Endothelial cell of umbilical vein (primary cell): ENCODE measurements at regions of chr3 and their contacts with region 1.

Region 1: GRCh38 chr3:195154793-195155535 is 116.0 kb downstream of the XXYLT1 start:
- DNase-seq: peak; percentile 100
- H3K4me3 ChIP-seq: no peak overlapping the region
- H3K27ac ChIP-seq: peak overlapping the region; percentile 95
- H3K4me1 ChIP-seq: peaks cover 86% of the 10 kb centered on the region
- H3K27me3 ChIP-seq: no peaks in the 10 kb centered on the region
- CTCF ChIP-seq: no peak
- POLR2A ChIP-seq: peak; percentile 80

Region 2: DNA sequence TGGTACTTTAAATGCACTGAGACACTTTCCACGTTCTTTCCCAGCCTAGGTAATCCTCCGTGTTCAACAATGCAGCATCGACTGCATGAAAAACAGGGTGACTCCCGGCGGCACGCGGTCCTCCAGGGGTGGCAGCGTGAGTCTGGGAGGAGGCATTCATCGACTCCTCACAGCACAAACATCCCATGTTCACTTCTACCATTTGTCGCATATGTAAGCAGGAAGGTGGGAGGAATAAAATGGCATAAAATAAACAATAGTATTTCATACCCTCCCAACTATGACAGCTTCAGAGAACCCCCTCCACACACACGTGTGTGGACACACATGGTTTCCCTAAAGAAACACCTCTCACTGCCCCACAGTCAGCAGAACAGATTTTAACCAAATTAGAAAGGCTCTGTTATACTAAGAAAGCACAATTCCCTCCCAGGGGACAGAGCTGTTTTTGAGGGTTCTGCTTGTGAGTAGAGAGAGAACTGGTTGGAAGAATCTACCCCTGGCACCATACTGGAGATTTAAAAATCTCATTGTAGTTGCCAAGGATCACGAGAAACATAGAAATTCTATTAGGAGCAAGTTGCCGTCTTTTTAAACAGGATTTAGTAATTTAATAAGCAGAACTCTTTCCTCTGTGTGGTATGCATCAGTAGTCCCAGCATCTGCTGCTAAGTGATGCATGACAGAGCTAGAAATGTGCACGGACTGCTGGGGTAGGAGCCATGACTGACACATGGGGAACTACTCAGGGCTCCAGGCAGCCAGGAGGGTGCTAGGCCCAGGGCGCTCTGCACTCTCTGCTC is 463.3 kb before region 1 on chr3:
- CTCF ChIA-PET with region 1: interaction called, 5 read pairs
- POLR2A ChIA-PET with region 1: interaction called, 18 read pairs
- dilution Hi-C with region 1: no loop called
- intact Hi-C with region 1: no loop called
- DNase-seq: peak; percentile 68
- H3K4me3 ChIP-seq: no peak overlapping the region
- H3K27ac ChIP-seq: peak overlapping the region; percentile 39
- H3K4me1 ChIP-seq: peaks cover 19% of the 10 kb centered on the region
- H3K27me3 ChIP-seq: no peaks in the 10 kb centered on the region
- CTCF ChIP-seq: no peak
- POLR2A ChIP-seq: peak; percentile 76

Region 3: GRCh38 chr3:195036974-195037373 is 118.0 kb before region 1 on chr3:
- CTCF ChIA-PET with region 1: no interaction called
- POLR2A ChIA-PET with region 1: no interaction called
- dilution Hi-C with region 1: no loop called
- intact Hi-C with region 1: no loop called
- DNase-seq: no peak
- H3K4me3 ChIP-seq: no peak overlapping the region
- H3K27ac ChIP-seq: no peak overlapping the region
- H3K4me1 ChIP-seq: peaks cover 30% of the 10 kb centered on the region
- H3K27me3 ChIP-seq: no peaks in the 10 kb centered on the region
- CTCF ChIP-seq: no peak
- POLR2A ChIP-seq: no peak

Region 4: DNA sequence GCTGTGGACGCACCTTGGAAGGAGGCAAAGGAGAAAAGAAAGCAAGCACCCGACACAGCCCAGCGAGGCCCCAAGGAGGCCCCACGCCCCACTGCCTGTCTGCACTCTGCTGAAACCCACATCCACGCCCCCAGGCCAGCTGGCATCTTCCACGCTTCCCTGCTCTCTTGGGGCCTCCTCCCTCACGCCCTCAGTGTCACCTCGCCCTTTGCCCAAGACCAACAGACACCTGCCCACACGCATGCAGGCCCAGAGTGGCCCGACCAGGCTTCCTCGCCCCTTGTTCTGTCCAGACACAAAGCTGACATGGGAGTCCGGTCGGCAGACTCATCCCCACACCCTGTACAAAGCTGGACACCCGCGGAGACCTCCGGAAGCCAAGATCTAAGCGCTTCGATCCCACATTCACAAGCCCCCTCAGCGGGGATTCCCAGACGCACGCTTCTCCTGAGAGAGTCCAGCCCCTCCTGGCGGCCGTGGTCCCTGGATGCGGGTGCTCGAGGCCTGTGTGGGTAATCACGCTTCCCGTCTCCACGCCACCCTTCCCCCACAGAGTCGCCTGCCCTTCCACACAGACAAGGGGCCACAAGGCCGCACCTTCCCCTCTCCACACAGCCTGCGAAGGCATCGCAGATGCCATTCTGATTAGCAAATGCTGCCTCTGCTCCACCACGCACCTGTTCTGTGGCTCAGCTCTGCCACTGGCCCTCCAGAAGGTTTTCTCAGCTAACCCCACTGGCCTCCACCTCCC is 60.6 kb before region 1 on chr3:
- CTCF ChIA-PET with region 1: no interaction called
- POLR2A ChIA-PET with region 1: no interaction called
- dilution Hi-C with region 1: no loop called
- intact Hi-C with region 1: no loop called
- DNase-seq: no peak
- H3K4me3 ChIP-seq: no peak overlapping the region
- H3K27ac ChIP-seq: no peak overlapping the region
- H3K4me1 ChIP-seq: peaks cover 7% of the 10 kb centered on the region
- H3K27me3 ChIP-seq: no peaks in the 10 kb centered on the region
- CTCF ChIP-seq: no peak
- POLR2A ChIP-seq: no peak

Region 5: GRCh38 chr3:195106418-195106906 is 48.5 kb before region 1 on chr3:
- CTCF ChIA-PET with region 1: interaction called, 4 read pairs
- POLR2A ChIA-PET with region 1: no interaction called
- dilution Hi-C with region 1: no loop called
- intact Hi-C with region 1: loop called (anchors 1 kb)
- DNase-seq: peak; percentile 76
- H3K4me3 ChIP-seq: no peak overlapping the region
- H3K27ac ChIP-seq: peak overlapping the region; percentile 96
- H3K4me1 ChIP-seq: peaks cover 44% of the 10 kb centered on the region
- H3K27me3 ChIP-seq: no peaks in the 10 kb centered on the region
- CTCF ChIP-seq: peak; percentile 97 to 98
- POLR2A ChIP-seq: no peak

Region 6: GRCh38 chr3:195129644-195130492 is 25.1 kb before region 1 on chr3:
- CTCF ChIA-PET with region 1: no interaction called
- POLR2A ChIA-PET with region 1: no interaction called
- dilution Hi-C with region 1: no loop called
- intact Hi-C with region 1: no loop called
- DNase-seq: no peak
- H3K4me3 ChIP-seq: no peak overlapping the region
- H3K27ac ChIP-seq: no peak overlapping the region
- H3K4me1 ChIP-seq: peaks cover 20% of the 10 kb centered on the region
- H3K27me3 ChIP-seq: no peaks in the 10 kb centered on the region
- CTCF ChIP-seq: no peak
- POLR2A ChIP-seq: no peak

Region 7: DNA sequence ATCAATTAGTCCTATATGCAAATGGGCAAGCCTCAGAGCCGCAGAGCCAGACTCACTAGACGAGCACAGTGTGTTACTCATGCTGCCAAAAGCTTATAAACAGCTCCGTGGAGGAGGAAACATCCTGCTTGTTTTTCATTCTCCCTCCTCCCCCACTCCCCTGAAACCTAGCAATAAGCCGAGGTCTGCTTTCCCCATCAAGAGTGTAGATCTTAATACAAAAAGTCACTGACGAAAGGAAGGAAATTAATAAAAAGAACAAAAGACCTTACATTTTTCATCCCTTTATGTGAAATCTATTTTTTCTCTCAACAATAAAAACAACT is 27.5 kb after region 1 on chr3:
- CTCF ChIA-PET with region 1: interaction called, 6 read pairs
- POLR2A ChIA-PET with region 1: interaction called, 7 read pairs
- dilution Hi-C with region 1: no loop called
- intact Hi-C with region 1: loop called (anchors 1 kb)
- DNase-seq: peak; percentile 96
- H3K4me3 ChIP-seq: no peak overlapping the region
- H3K27ac ChIP-seq: peak overlapping the region; percentile 93
- H3K4me1 ChIP-seq: peaks cover 65% of the 10 kb centered on the region
- H3K27me3 ChIP-seq: no peaks in the 10 kb centered on the region
- CTCF ChIP-seq: no peak
- POLR2A ChIP-seq: no peak